ENCODE measurements at regions of chr1 and their contacts with region 1.

Region 1: GRCh38 chr1:223845810-223846682 is at the start of gene TP53BP2:
- DNase-seq: peak; percentile 83
- ATAC-seq: peak; percentile 83
- H3K4me3 Mint-ChIP-seq: peak within 1 kb of the TSS; percentile 99
- H3K27ac Mint-ChIP-seq: peak within 1 kb of the TSS; percentile 99
- H3K4me1 Mint-ChIP-seq: peaks cover 32% of the 10 kb centered on the region
- H3K27me3 Mint-ChIP-seq: no peaks in the 10 kb centered on the region
- total RNA-seq, gene TP53BP2: 35.8 to 39.6 TPM

Region 2: DNA sequence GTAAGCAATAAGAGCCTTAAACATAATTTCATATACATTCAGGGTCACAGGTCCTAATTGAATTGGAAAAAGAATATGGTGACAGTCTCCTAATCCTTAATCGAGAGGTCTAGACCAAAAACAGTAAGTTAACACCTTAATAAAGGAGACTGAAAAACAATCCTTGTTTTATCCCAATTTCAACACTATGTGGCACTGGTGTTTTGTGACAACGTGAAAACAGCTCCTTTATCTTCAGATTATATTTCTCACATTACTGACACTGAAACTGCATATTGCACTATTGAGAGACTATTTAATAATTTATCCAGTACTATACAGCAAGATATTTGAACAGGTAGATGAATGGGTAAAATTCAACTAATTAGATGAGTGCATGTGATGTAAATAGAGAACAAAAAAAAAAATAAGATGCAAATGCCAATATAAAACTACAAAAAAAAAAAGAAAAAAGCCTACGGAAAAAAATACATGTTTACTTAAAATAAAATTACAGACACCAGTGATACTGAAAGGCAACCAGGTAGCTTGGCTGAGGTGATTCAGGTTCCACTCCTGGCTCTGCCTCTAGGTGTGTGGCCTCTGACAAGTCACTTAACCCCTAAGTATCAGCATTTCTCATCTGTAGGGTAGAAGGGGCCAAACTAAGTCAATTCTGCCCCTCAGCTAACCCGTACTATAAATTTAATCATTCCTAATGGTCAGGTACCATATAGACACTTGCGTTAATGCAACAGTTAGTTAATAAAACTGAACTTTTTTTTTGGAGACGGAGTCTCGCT is 34.2 kb before region 1 on chr1:
- CTCF ChIA-PET with region 1: interaction called, 11 read pairs
- DNase-seq: no peak
- ATAC-seq: peak; percentile 61
- H3K4me3 Mint-ChIP-seq: no peak overlapping the region
- H3K27ac Mint-ChIP-seq: no peak overlapping the region
- H3K4me1 Mint-ChIP-seq: peaks cover 16% of the 10 kb centered on the region
- H3K27me3 Mint-ChIP-seq: no peaks in the 10 kb centered on the region